HCT116 (cell line): ENCODE measurements at regions of chr17 and their contacts with region 1.

Region 1: DNA sequence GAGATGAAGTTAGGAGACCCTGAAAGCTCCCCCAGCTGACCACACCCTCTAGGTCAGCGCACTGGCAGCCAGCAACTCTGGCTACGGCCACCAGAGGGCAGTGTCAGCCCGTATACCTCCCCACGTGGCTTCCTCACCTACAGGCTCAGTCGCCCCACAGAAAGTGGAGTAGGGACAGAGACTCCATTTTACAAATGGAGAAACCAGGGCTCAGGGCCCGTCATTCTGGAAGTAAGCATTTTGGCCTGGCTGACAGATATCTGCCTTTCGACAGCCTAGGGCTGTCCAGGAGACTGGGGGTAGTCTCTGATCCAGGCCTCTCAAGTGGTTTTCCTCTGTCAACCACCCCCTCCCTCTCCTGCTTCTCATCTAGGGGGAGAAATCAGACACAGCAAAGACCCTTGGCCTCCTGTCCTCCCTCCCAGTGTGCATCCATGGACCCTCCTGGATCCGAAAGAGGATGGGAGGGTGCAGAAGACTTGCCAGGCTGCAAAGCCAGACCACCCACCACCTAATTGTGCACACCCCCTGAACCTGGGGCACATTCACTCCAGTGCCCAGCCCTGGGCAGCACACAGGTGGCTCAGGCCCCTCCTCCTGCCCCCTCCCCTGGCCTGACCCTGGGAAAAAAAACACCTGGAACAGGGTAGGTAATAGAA is 3.8 kb upstream of the HAP1 start:
- DNase-seq: peak; percentile 63
- ATAC-seq: peak; percentile 79
- H3K4me3 ChIP-seq: no peak overlapping the region
- H3K27ac ChIP-seq: peak overlapping the region; percentile 39
- H3K4me1 ChIP-seq: peaks cover 21 to 46% of the 10 kb centered on the region in 2 experiments
- H3K27me3 ChIP-seq: no peaks in the 10 kb centered on the region
- CTCF ChIP-seq: peak; percentile 95 to 97 (median 96)
- POLR2A ChIP-seq: no peak
- RAD21 ChIP-seq: peak; percentile 100

Region 2: DNA sequence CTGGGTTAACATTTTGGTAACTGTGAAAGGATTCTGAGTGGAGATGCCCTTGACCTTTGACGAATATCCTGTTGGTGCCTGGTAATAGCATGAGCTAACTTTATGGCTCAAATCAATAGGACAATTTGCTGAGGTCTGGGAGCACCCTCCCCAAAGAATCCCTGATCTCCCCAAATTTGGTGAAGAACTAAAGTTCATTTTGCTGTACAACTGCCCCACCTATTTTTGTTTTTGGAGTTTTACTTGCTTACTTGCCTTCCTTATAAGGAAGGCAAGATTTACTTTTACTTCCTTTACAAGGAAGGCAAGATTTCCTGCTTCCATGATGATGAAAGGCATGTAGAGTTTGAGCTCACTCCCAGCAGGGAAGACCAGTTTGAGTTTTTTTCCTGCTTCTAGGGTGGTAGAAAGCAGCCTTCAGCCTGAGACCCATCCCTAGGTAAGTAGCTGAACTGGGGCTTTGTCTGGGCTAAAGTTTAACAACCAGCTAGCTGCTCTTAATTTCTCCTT is 630.2 kb before region 1 on chr17:
- CTCF ChIA-PET with region 1: no interaction called
- POLR2A ChIA-PET with region 1: no interaction called
- RAD21 ChIA-PET with region 1: no interaction called
- intact Hi-C with region 1: no loop called
- DNase-seq: no peak
- ATAC-seq: no peak
- H3K4me3 ChIP-seq: no peak overlapping the region
- H3K27ac ChIP-seq: no peak overlapping the region
- H3K4me1 ChIP-seq: peaks cover 13 to 36% of the 10 kb centered on the region in 2 experiments
- H3K27me3 ChIP-seq: no peaks in the 10 kb centered on the region
- CTCF ChIP-seq: no peak
- POLR2A ChIP-seq: no peak
- RAD21 ChIP-seq: no peak

Region 3: DNA sequence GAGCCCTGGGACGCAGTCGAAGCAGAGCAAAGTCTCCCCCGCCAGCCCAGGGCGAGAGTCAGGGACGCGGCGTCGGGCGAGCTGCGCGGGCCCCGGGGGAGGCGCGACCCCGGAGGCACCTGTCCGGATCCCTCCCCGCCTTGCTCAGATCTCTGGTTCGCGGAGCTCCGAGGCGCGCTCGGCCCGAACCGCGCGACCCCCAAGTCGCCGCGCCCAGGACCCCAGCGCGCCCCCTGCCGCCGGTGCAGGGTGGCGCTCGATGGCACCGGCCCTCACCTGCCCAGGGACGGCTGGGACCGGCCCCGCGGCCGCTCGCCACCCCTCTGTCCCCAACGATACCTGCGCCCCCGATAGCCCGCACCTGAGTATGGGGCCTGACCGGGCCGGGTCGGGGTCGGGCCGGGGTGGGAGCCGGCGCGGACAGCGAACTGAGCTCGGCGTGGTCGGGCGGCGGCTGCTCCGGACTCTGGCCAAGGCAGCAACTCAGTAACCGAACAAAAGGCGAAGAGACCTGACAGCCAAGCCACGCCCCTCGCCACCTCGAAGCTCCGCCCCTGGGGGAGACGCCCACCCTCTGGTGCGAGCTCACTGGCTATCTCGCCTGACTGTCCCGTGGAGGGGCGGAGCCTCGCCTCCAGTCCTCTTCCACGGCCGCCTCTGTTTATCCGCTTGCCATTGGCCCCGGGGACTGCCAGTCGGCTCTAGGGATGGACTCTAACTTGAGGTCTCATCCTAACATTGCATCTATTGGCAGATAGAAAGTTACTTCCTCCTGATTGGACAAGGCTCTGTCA is 48.2 kb after region 1 on chr17 and contains the start of gene JUP:
- CTCF ChIA-PET with region 1: interaction called, 5 read pairs
- POLR2A ChIA-PET with region 1: interaction called, 10 read pairs
- RAD21 ChIA-PET with region 1: interaction called in 1 of 2 experiments, 3 read pairs
- intact Hi-C with region 1: no loop called
- DNase-seq: peak; percentile 99
- ATAC-seq: peak; percentile 94
- H3K4me3 ChIP-seq: peak within 1 kb of the TSS; percentile 78 to 80
- H3K27ac ChIP-seq: peak within 1 kb of the TSS; percentile 95
- H3K4me1 ChIP-seq: peaks cover 35 to 60% of the 10 kb centered on the region in 2 experiments
- H3K27me3 ChIP-seq: no peaks in the 10 kb centered on the region
- CTCF ChIP-seq: peak in 2 of 3 experiments; percentile 71 to 75; a peak in 5 of 6 replicates
- POLR2A ChIP-seq: peak; percentile 45
- RAD21 ChIP-seq: peak; percentile 46; the same call in 1 of the 2 replicates
- total RNA-seq, gene JUP: 224 TPM

Region 4: DNA sequence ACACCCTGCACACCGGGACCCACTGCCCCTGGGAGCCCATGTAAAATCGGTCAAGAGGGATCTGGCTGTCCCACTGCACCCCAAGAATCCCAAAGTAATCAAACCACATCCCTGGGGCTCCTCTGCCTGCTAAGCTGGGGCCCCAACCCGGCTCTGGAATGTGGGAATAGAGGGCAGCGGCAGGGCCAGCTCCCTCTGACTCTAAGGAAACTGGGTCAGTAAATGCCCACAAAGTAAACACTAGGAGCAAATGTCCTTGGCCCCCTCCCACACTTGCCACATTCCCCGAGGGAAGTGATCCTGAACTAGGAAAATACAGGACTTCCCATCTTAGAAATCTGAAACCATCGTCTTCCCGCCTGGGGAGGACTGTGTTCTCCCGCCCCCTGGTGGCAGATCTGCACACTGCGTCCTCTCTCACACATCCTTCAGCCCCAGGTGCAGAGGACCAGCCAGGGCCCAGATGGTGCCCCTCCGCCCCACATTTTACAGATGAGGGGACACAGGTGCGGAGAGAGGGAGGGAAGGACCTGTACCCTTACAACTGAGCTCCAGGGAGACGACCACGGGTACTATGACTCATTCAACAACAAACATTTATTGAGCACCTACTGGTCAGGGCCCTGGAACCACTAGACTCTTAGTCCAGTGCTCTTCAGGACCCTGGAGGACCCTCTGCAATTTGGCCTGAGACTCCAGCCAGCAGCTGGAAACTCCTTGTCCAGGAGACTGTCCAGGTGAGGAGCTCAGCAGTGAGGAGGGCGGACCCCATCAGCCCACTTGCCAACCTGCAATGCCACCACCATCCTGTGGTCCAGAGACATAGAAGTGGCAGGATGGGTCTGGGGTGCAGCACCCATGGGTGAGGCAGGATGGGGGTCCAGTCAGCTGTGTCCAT is 63.4 kb after region 1 on chr17:
- CTCF ChIA-PET with region 1: interaction called, 32 read pairs
- POLR2A ChIA-PET with region 1: interaction called, 6 read pairs
- RAD21 ChIA-PET with region 1: interaction called, 5 read pairs
- intact Hi-C with region 1: loop called (anchors 1 kb)
- DNase-seq: peak; percentile 56
- ATAC-seq: peak; percentile 64
- H3K4me3 ChIP-seq: peak overlapping the region; percentile 32 to 39
- H3K27ac ChIP-seq: peak overlapping the region; percentile 82
- H3K4me1 ChIP-seq: peaks cover 26 to 40% of the 10 kb centered on the region in 2 experiments
- H3K27me3 ChIP-seq: no peaks in the 10 kb centered on the region
- CTCF ChIP-seq: peak; percentile 92 to 96 (median 95)
- POLR2A ChIP-seq: no peak
- RAD21 ChIP-seq: peak; percentile 99

Region 5: GRCh38 chr17:41811549-41812380 is 73.6 kb after region 1 on chr17 and contains the start of gene P3H4:
- CTCF ChIA-PET with region 1: interaction called, 5 read pairs
- POLR2A ChIA-PET with region 1: no interaction called
- RAD21 ChIA-PET with region 1: interaction called in 1 of 2 experiments, 3 read pairs
- intact Hi-C with region 1: loop called (anchors 2 kb)
- DNase-seq: peak; percentile 44
- ATAC-seq: peak; percentile 81
- H3K4me3 ChIP-seq: peak within 1 kb of the TSS; percentile 66 to 72
- H3K27ac ChIP-seq: peak within 1 kb of the TSS; percentile 97
- H3K4me1 ChIP-seq: peaks cover 10 to 41% of the 10 kb centered on the region in 2 experiments; a peak in 3 of 4 replicates
- H3K27me3 ChIP-seq: no peaks in the 10 kb centered on the region
- CTCF ChIP-seq: peak in 2 of 3 experiments; percentile 51 to 64; a peak in 4 of 6 replicates
- POLR2A ChIP-seq: peak; percentile 39
- RAD21 ChIP-seq: no peak; the same call in 1 of the 2 replicates
- total RNA-seq, gene P3H4: 23.4 TPM

Region 6: DNA sequence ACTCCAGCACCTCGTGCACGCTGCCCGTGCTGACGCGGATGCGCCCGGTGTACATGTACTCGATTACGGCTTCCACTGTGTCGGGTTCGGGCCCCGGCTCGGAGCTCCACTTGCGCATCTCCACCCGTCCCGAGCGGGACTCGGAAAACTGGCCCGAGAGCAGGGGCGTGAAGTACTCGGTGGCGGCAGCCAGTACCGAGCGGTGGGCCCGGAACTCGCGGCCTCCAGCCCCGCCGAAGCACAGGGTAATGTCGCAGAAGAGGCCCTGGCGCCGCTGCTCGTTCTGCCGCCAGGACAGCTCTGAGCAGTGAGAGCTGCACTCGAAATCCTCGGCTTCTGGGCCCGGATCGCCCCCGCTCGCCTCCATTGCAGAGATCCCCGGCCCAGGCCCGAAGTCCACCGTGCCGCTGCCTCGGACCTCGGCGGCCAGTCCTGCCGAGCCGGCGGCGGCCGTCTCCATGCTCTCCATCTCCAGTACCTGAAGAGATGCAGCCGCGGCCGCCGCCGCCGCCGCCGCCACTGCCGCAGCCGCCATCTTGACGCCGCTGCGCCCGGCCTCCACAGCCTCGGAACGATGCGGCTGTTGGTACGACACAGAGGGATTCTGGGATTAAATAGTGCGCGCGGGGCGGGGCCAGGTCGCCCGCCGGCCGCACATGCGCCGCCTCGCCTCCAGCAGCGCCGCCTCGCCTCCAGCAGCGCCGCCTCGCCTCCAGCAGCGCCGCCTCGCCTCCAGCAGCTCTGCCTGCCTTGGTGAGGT is 126.8 kb after region 1 on chr17 and contains the start of gene KLHL11:
- CTCF ChIA-PET with region 1: no interaction called
- POLR2A ChIA-PET with region 1: no interaction called
- RAD21 ChIA-PET with region 1: no interaction called
- intact Hi-C with region 1: loop called (anchors 1 kb)
- DNase-seq: peak; percentile 60
- ATAC-seq: peak; percentile 96
- H3K4me3 ChIP-seq: peak within 1 kb of the TSS; percentile 95 to 100
- H3K27ac ChIP-seq: peak within 1 kb of the TSS; percentile 78
- H3K4me1 ChIP-seq: peaks cover 9 to 18% of the 10 kb centered on the region in 2 experiments; a peak in 3 of 4 replicates
- H3K27me3 ChIP-seq: no peaks in the 10 kb centered on the region
- CTCF ChIP-seq: no peak
- POLR2A ChIP-seq: peak; percentile 89
- RAD21 ChIP-seq: no peak
- total RNA-seq, gene KLHL11: 22.4 TPM

Region 7: DNA sequence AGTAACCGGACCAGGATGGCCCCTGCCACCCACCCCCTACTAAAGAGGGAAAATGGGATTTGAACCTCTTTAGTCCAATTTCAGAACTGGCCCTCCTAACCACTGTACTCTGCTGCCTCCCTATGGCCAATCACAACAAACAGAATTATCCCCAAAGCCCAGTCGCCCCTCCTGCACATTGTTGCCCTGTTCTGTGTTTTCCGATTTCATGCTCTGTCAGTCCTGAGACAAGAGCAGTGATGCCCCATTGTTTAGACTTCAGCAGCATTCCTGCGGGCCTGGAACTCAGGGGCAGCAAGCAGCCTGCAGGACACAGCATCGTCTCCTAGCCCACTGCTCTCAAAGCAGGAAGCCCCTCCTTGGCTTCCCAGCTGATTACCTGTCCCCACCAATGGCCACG is 147.5 kb after region 1 on chr17:
- CTCF ChIA-PET with region 1: no interaction called
- POLR2A ChIA-PET with region 1: no interaction called
- RAD21 ChIA-PET with region 1: no interaction called
- intact Hi-C with region 1: loop called (anchors 1 kb)
- DNase-seq: no peak
- ATAC-seq: peak; percentile 71; the same call in 1 of the 2 replicates
- H3K4me3 ChIP-seq: no peak overlapping the region
- H3K27ac ChIP-seq: no peak overlapping the region
- H3K4me1 ChIP-seq: no peaks in the 10 kb centered on the region
- H3K27me3 ChIP-seq: no peaks in the 10 kb centered on the region
- CTCF ChIP-seq: peak; percentile 46 to 54 (median 48); a peak in 4 of 6 replicates
- POLR2A ChIP-seq: no peak
- RAD21 ChIP-seq: peak; percentile 70